ENCODE measurements at regions of chr6 and their contacts with region 1.

Region 1: DNA sequence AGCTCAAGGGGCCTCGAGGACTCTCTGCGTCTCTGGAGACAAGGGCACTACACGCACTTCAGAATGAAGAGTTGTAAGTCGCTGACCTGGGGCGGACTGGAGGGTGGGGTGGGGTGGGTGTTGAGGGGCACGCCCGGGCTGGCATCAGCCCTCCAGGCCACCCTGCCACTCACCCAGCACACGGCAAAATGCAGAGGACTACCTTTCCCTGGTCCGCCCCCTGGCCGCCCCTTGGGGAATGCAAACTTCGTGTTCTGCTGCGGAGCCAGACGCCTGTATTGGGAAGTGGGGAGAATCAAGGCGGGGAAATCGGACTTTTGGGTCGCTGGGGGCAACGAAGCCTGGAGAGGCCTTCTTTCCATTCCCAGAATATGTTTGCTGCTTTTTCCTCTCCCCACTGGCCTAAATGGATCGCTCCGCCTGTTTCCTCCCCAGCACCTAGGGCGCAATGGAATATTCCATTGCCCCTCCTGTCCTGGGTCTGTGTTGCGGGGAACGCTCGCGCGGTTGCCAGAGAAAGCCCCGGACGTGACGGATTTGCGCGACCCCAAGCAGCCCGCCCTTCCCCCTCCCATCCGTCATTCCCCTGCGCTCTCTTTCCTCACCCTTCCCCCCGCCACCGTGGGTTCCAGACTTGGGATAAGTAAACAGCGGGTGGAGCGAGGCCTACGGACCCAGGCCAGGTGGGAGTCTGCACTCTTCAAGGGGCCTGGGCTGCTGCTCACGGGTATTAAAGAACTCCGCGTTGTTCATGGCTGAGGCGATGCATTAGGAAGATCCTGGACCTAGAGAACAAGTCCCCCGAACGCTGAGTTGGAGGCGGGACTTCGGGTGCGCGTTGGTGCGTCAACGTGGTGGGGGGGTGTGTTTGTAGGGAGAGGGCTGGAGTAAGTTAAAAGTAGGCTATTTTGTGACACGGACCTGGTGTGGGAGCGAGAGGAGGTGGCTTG is at the start of gene PPT2:
- DNase-seq: peak; percentile 70 to 77
- H3K4me3 ChIP-seq: peak within 1 kb of the TSS; percentile 77
- H3K27ac ChIP-seq: peak within 1 kb of the TSS; percentile 96
- H3K4me1 ChIP-seq: peaks cover 18% of the 10 kb centered on the region
- H3K27me3 ChIP-seq: no peaks in the 10 kb centered on the region
- CTCF ChIP-seq: peak; percentile 45; the same call in 1 of the 2 replicates
- total RNA-seq, gene PPT2: 38.2 and 42.5 TPM in 2 replicates

Region 2: GRCh38 chr6:32195652-32195901 is 41.7 kb after region 1 on chr6:
- CTCF ChIA-PET with region 1: no interaction called
- POLR2A ChIA-PET with region 1: no interaction called
- intact Hi-C with region 1: loop called (anchors 1 kb)
- DNase-seq: peak; percentile 98 to 100
- H3K4me3 ChIP-seq: peak overlapping the region; percentile 96; the same call in 1 of the 2 replicates
- H3K27ac ChIP-seq: no peak overlapping the region
- H3K4me1 ChIP-seq: peaks cover 18% of the 10 kb centered on the region
- H3K27me3 ChIP-seq: peaks cover 4% of the 10 kb centered on the region
- CTCF ChIP-seq: no peak; the same call in none of the 2 replicates

Region 3: DNA sequence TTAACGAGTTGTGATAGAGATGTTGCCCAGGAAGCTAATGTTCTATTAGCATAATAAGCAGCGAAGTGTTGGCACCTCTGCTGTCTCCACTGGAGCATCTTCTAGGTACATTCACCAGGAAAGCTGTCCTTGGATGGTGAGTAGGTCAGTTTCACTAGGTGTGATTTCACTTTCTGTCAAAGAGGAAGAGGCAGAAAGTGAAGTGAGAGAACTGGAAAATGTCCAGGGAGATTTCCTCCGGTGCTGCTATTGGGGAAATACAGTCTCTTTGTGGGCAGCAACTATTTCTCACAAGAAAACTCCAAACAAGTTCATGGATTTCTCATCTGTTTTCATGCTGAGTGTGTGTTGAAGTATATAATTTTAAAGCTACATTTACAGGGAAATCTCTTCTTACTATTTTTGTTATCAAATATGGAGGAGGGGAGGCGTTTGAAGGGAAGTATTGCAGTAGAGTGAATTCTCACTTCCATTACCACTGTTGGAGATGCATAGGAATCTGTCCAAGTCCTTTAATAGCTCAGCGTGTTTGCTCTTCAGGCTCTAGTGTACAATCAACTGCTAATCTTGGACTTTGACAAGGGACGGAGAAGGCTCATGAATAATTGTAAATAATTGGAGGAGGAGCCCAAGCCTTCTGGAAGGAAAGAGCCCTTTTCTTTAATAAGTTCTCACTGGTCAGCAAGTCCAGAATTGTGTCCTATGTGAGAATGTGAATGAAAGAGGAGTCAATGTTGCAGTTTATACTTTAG is 233.9 kb after region 1 on chr6:
- CTCF ChIA-PET with region 1: no interaction called
- POLR2A ChIA-PET with region 1: no interaction called
- intact Hi-C with region 1: no loop called
- DNase-seq: no peak
- H3K4me3 ChIP-seq: no peak overlapping the region
- H3K27ac ChIP-seq: no peak overlapping the region
- H3K4me1 ChIP-seq: no peaks in the 10 kb centered on the region
- H3K27me3 ChIP-seq: peaks cover 10% of the 10 kb centered on the region; the same call in 1 of the 2 replicates
- CTCF ChIP-seq: no peak